ENCODE measurements at regions of chr2 and their contacts with region 1.

Region 1: DNA sequence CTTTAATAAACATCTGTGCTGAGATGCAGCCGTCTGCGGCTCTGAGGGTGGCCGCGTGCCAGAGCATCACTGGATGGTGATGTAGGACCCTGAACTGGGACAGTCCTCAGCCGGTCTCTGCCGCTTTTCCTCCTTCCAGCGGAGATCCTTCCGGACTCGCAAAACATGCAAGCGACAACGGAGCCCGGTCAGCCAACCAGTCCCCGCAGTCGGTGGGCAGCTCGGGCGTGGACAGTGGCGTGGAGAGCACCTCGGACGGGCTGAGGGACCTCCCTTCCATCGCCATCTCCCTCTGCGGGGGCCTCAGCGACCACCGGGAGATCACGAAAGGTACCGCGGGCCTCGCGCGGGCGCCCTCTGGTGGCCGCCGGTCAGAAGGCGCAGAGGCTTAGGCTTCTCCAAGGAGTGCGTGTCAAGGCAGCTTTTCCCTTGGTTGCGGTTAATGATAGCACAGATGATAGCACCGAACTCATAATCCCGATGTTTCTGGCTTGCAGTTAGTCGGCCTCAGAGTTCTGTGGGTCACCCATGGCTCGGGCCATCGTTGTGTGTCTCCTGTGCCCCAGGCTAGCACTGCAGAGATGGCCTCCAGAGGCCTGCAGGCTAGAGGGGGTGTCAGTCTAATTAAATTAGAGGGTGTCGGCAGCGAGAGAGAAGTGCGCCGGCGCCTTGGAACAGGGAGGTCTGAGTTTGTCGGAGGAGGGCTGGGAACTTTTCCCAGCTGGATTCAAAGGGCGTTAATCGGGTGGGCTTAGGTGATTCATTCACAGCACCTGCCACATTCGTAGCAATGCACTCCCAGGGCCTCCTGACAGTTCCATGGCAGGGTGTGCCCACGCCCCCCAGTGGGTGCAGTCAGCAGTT is 38.5 kb downstream of the LPIN1 start:
- DNase-seq: peak; percentile 17 to 93
- H3K4me3 ChIP-seq: peak overlapping the region; percentile 39 to 55 (median 43); a peak in 7 of 8 replicates
- H3K27ac ChIP-seq: no peak overlapping the region
- H3K4me1 ChIP-seq: 0 out of 7 replicates have a peak, but pooled peaks cover 0 to 4% (median 0%) of the 10 kb centered on the region in 4 experiments
- H3K27me3 ChIP-seq: no peaks in the 10 kb centered on the region; a peak in 2 of 7 replicates
- CTCF ChIP-seq: peak; percentile 81 to 94 (median 88)
- EP300 ChIP-seq: no peak
- POLR2A ChIP-seq: no peak
- RAD21 ChIP-seq: peak; percentile 45 to 59

Region 2: GRCh38 chr2:11411768-11412448 is 373.1 kb before region 1 on chr2:
- CTCF ChIA-PET with region 1: no interaction called
- POLR2A ChIA-PET with region 1: no interaction called
- DNase-seq: peak in 1 of 2 experiments; percentile 65
- H3K4me3 ChIP-seq: no peak overlapping the region
- H3K27ac ChIP-seq: no peak overlapping the region
- H3K4me1 ChIP-seq: no peaks in the 10 kb centered on the region
- H3K27me3 ChIP-seq: no peaks in the 10 kb centered on the region
- CTCF ChIP-seq: peak; percentile 65 to 84 (median 80)
- EP300 ChIP-seq: no peak
- POLR2A ChIP-seq: no peak
- RAD21 ChIP-seq: peak; percentile 91 to 93

Region 3: GRCh38 chr2:11802782-11803191 is 17.8 kb after region 1 on chr2:
- CTCF ChIA-PET with region 1: interaction called, 15 read pairs
- POLR2A ChIA-PET with region 1: no interaction called
- DNase-seq: no peak
- H3K4me3 ChIP-seq: no peak overlapping the region
- H3K27ac ChIP-seq: no peak overlapping the region
- H3K4me1 ChIP-seq: no peaks in the 10 kb centered on the region
- H3K27me3 ChIP-seq: no peaks in the 10 kb centered on the region
- CTCF ChIP-seq: no peak
- EP300 ChIP-seq: no peak
- POLR2A ChIP-seq: no peak
- RAD21 ChIP-seq: no peak

Region 4: GRCh38 chr2:11858883-11859282 is 73.9 kb after region 1 on chr2:
- CTCF ChIA-PET with region 1: no interaction called
- POLR2A ChIA-PET with region 1: no interaction called
- DNase-seq: no peak
- H3K4me3 ChIP-seq: no peak overlapping the region
- H3K27ac ChIP-seq: no peak overlapping the region
- H3K4me1 ChIP-seq: peaks cover 0 to 6% (median 2%) of the 10 kb centered on the region in 4 experiments; a peak in 5 of 7 replicates
- H3K27me3 ChIP-seq: no peaks in the 10 kb centered on the region
- CTCF ChIP-seq: no peak
- EP300 ChIP-seq: no peak
- POLR2A ChIP-seq: no peak
- RAD21 ChIP-seq: no peak

Region 5: DNA sequence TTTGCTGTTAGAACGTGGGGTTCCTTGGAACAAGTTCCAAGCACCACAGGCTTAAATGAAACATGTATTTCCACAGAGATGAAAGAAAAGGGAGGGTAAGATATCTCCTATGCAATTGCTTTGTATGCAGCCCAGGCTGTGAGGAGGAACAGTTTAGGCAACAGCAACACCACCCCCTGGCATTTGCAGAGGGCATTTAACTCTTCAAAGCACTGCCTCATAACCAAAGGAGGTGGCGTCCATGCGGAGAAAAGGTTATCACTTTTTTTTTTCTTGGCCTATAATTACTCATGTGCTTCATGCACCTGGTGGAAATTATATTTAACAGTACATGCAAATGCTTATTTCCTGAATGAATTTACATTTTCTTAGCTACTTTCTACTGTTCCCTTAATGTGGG is 247.4 kb after region 1 on chr2:
- CTCF ChIA-PET with region 1: no interaction called
- POLR2A ChIA-PET with region 1: no interaction called
- DNase-seq: no peak
- H3K4me3 ChIP-seq: no peak overlapping the region
- H3K27ac ChIP-seq: no peak overlapping the region
- H3K4me1 ChIP-seq: 0 out of 7 replicates have a peak, but pooled peaks cover 0 to 2% (median 0%) of the 10 kb centered on the region in 4 experiments
- H3K27me3 ChIP-seq: no peaks in the 10 kb centered on the region
- CTCF ChIP-seq: peak; percentile 12 to 22 (median 15); a peak in 3 of 4 replicates
- EP300 ChIP-seq: no peak
- POLR2A ChIP-seq: no peak
- RAD21 ChIP-seq: peak; percentile 24 to 48; a peak in 3 of 4 replicates

Measured in H1 (cell line).